Caco-2 (cell line): ENCODE measurements at regions of chr19 and their contacts with region 1.

Region 1: DNA sequence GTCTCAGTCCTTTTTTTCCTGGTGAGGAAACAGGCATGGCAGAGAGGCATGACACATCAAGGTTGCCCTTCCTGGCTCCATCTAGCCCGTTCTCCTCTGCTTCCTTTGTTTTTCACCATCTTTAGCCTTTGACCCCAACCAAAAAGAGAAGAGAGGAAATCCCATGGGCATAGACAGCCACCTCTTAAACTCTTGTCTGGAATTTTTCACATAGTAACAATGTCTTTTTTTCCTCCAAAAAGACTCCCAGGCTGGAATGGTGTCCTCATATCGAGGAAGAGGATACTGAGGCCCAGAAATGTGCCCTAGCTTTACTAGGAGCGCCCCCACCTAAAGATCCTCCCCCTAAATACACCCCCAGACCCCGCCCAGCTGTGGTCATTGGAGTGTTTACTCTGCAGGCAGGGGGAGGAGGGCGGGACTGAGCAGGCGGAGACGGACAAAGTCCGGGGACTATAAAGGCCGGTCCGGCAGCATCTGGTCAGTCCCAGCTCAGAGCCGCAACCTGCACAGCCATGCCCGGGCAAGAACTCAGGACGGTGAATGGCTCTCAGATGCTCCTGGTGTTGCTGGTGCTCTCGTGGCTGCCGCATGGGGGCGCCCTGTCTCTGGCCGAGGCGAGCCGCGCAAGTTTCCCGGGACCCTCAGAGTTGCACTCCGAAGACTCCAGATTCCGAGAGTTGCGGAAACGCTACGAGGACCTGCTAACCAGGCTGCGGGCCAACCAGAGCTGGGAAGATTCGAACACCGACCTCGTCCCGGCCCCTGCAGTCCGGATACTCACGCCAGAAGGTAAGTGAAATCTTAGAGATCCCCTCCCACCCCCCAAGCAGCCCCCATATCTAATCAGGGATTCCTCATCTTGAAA is at the start of gene GDF15:
- DNase-seq: peak; percentile 97
- H3K4me3 ChIP-seq: peak within 1 kb of the TSS; percentile 76
- H3K4me3 Mint-ChIP-seq: peak within 1 kb of the TSS; percentile 85
- H3K27ac Mint-ChIP-seq: peak within 1 kb of the TSS; percentile 92
- H3K4me1 ChIP-seq: peaks cover 45% of the 10 kb centered on the region
- H3K4me1 Mint-ChIP-seq: peaks cover 6% of the 10 kb centered on the region
- H3K27me3 ChIP-seq: no peaks in the 10 kb centered on the region
- H3K27me3 Mint-ChIP-seq: no peaks in the 10 kb centered on the region
- CTCF ChIP-seq: peak; percentile 76 to 78
- total RNA-seq, gene GDF15: 55.3 and 56.1 TPM in 2 replicates

Region 2: DNA sequence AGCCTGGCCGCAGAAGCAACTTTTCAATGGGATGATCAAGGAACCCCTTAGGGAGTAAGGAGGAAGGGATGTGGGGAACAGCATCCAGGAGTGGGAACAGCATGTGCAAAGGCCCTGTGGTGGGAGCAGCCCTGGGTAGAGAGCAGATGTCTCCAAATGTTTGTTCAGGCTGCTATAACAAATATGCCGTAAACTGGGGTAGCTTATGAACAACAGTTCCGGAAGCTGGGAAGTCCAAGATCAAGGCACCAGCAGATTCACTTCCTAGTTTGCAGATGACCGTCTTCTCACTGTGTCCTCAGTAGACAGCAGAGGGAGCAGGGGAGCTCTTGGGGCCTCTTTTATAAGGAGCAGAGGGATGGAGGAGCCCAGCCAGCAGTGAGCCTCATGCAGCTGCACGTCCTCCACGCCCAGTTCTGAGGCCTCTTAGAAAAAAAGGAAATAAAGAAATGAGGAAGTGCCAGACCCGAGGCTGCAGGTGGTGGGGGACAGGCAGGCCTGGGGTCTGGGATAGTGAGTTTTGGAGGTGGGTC is 15.7 kb after region 1 on chr19:
- CTCF ChIA-PET with region 1: interaction called, 10 read pairs
- POLR2A ChIA-PET with region 1: interaction called, 15 read pairs
- intact Hi-C with region 1: loop called (anchors 2 kb)
- DNase-seq: peak; percentile 74 to 83
- H3K4me3 ChIP-seq: peak overlapping the region; percentile 25
- H3K4me3 Mint-ChIP-seq: peak overlapping the region; percentile 46
- H3K27ac Mint-ChIP-seq: peak overlapping the region; percentile 77
- H3K4me1 ChIP-seq: peaks cover 11% of the 10 kb centered on the region
- H3K4me1 Mint-ChIP-seq: peaks cover 21% of the 10 kb centered on the region
- H3K27me3 ChIP-seq: no peaks in the 10 kb centered on the region
- H3K27me3 Mint-ChIP-seq: no peaks in the 10 kb centered on the region
- CTCF ChIP-seq: peak; percentile 41 to 68

Region 3: DNA sequence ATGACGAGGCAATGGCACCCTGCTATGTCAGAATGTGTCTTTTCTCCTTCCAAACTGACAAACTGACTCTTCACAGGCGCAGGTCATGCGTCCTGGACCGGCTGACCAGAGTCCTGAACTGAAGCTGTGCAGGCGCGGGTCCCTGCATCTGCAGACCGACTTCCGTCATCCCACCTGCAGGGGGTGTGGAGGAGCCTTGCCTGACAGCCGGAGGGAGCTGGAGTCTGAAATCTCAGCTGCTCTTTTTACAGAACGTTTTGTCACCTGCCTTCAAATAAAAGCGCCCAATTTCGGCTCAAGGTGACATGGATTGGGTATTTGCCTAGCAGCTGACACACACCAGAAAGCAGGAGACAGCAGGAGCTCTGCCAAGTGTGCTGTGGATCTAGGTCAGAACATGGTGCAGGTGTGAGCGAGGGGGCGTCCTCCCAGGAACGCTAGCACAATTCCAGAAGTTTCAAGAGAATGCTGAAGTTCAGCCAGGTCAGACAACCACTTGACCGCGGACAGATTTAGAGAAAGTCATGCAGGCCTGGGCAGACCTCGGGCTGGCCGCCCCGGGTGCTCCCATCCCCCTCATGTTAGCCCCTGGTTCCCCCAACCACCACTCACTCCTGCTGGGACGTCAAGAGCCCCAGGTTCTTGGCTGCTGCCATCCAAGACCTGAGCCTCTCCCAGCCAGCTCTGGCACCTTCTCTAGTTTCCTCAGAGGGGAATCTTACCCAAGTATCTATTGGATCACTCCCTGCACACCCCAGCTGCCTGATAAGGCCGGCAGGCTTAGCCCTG is 103.1 kb after region 1 on chr19:
- CTCF ChIA-PET with region 1: no interaction called
- POLR2A ChIA-PET with region 1: no interaction called
- intact Hi-C with region 1: no loop called
- DNase-seq: peak; percentile 68 to 80
- H3K4me3 ChIP-seq: no peak overlapping the region
- H3K4me3 Mint-ChIP-seq: no peak overlapping the region
- H3K27ac Mint-ChIP-seq: no peak overlapping the region
- H3K4me1 ChIP-seq: no peaks in the 10 kb centered on the region
- H3K4me1 Mint-ChIP-seq: no peaks in the 10 kb centered on the region
- H3K27me3 ChIP-seq: no peaks in the 10 kb centered on the region
- H3K27me3 Mint-ChIP-seq: no peaks in the 10 kb centered on the region
- CTCF ChIP-seq: peak; percentile 36 to 79